Posterior vena cava (tissue), 2 donors: ENCODE measurements at regions of chr20 and their contacts with region 1.

Region 1: DNA sequence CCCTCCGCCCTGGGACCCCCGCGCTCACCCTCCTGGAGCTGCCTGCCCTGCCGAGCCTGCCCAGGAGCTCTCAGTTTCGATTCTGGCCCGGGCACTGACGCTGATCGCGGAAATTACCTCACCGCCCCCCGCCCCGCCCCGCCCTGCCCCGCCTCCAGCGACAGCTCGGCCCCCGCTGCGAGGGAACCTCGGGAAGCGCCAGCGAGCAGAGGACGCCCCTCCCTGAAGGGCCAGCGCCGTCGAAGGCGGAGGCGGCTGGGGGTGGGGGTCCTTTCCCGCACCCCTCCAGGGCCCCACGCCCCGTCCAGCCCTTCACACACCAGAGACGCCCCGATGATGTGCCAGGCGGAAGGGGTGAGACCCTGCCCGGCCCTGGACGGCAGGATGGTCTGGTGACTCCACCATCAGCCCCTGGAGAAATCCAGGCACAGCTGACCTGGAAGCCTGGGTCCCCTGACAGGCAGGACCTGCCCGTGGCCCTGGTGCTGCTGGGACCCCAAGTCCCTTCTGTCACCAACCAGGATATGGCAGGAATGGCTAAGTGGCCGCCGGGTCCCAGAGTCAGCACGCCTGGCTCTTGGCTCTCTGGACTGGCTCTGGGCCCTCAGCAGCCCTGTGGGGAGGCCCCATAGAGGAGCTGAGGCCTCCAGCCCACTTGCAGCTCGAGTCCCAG is at the start of gene HELZ2:
- DNase-seq: peak; percentile 93
- total RNA-seq, gene HELZ2: 13.7 to 25.5 TPM

Region 2: DNA sequence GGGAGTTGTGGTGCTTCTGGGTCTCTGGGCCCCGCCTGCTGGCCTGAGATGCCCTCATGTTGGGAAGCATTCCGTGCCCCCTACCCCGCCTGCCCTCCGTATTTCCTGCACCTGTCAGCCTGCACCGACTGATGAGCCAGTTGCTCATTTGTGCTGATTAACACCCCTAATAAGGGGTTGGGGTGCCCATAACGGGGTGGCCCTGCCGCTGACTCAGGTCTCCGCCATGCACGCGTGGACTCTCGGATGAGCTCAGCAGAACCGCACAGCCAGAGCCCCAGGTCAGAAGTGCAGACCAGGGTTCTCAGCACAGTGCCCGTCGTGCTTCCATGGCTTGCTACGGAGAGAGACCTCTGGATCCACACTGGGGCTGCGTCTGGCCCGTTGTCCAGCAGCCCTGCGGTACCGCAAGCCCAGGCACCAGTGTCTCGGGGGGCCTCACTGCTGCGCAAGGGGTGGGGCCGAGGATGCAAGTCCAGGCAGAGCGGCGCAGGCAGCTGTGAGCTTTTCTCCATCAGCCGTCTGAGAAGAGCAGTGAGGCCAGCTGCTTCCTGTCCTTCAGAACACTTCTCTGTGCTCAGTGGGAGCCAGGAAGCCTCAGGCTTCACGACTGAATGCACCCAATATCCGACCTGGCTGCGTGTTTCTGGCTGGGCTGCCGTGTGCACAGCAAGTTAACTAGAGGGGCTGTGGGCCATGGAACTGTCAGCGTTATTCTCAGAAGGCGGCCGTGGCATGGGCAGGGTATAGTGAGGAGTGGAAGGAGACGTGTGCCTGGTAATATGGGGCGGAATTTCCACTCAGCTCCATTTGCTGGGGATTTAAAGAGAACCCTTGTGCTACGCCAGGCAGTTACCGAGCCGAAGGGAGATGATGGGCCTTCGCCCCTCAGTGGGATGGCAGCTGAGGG is 1372.9 kb before region 1 on chr20:
- intact Hi-C with region 1: loop called in 1 of 2 experiments (anchors 5 kb)
- DNase-seq: peak; percentile 72

Region 3: DNA sequence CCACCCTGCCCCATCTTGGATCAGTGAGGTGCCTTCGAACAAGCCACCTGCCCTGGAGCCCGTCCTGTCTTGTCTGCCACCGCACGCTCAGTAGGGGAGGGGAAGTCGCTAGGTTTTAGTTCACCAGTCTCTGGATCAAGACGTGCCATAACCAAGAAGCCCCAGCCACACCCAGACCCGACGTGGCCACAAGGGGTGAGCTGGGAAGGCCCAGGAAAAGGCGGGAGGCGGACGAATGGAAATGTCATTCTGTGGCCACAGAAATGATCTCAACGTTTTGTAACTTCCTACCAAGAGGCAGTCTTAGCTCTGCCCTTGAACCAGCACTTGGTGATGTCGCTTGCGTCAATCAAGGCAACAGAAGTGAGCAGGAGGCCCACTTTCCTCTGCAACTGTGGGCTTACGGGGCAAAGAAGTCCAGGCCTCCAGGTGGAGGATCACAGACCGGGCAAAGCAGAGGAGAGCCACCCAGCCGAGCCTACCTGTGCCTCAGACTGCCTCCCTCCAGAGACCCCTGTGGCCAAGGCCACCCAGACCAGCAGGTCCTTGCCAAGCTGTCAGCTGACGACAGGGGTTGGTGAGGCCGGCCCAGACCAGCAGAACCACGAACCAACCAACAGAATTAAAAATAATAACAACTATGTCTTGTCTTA is 38.1 kb after region 1 on chr20:
- intact Hi-C with region 1: no loop called
- DNase-seq: no peak

Region 4: DNA sequence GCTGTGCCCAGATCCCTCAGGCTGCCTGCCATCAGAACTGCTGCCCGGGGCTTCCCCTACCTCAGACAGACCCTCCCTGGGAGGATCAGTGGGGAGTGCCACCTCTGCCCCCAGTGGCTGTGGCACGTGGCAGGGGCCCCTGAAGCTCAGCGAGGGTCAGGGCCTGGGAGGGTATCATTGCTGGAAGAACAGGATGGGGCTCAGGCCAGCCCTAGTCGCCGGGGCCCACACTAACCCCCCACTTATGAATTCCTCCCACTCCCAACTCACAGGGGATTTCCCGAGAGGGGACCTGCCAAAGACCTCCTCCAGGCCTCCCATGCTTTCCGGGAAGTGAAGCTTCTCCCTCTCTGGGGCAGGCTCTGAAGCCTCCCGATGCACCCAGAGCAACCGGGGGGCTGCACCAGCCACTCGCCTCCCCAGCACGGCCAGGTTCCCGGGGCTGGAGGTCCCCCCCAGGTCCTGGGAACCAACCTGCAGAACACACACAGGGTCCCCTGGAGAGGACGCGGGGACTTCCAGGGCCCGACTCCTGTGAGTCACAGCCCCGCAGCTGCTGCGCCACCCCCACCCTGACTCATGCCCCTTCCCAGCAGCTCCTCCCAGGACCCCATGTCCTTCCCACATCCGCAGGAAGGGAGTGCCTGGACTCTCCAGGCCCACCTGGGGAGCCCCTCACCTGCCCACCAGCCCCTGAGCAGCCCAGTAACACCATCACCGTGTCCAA is 124.6 kb after region 1 on chr20:
- intact Hi-C with region 1: no loop called
- DNase-seq: peak; percentile 94